Activated naive CD4-positive, alpha-beta T cell treated with anti-CD3 and anti-CD28 coated beads, Interleukin-2, amount 10 ng/mL, durations not matched to agents 7 days and 5 days (primary cell): ENCODE measurements at regions of chr17 and their contacts with region 1.

Region 1: GRCh38 chr17:69607162-69607834 is 192.8 kb downstream of the MAP2K6 start:
- DNase-seq: peak; percentile 67
- H3K4me3 Mint-ChIP-seq: no peak overlapping the region
- H3K27ac Mint-ChIP-seq: peak overlapping the region; percentile 40
- H3K4me1 Mint-ChIP-seq: peaks cover 41% of the 10 kb centered on the region
- H3K27me3 Mint-ChIP-seq: no peaks in the 10 kb centered on the region

Region 2: DNA sequence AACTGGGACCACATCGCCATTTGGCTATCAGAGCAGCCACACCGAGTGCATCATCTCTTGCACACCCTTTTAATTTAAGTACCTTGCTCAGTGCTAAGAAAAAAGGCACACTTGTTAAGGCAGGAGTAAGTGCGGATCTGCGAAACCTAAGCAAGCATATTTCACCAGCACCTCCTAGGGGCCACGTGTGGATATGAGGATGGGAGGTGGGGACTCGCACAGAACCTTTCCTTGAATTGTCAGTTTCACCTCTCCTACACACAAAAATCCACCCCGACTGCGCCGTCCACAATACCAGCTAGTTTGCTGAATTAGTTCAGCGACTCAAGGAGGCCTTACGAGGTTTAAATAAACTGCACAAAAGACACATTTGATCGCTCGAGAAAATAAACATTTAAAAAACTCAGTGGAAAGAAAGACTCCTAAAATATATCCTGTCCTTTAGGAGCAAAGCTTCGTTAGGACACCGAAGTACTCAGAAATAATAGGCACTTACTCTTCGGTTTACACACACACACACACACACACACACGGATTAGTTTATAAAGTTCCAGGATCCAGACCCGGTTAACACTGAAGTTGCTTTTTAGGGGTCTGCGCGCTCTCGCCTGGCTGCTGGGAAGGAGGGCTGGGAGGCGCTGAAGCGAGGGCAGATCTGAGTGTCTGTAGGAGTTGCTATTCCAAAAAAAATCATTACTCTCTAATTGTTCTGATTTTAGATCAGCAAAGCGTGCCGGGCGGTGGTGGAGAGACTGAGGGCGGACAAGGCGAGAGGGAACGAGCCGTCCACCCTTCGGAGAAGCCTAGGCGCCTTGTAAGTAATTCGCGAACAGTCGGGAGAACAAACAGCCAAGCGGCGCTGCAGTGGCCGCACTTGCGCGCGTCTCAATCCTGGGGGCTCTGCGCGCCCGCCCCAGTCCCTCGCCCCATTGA is 561.0 kb after region 1 on chr17:
- CTCF ChIA-PET with region 1: interaction called, 10 read pairs
- DNase-seq: peak; percentile 48
- H3K4me3 Mint-ChIP-seq: peak overlapping the region; percentile 66
- H3K27ac Mint-ChIP-seq: no peak overlapping the region
- H3K4me1 Mint-ChIP-seq: peaks cover 20% of the 10 kb centered on the region
- H3K27me3 Mint-ChIP-seq: peaks cover 40% of the 10 kb centered on the region